Astrocyte of the cerebellum (primary cell): ENCODE measurements at regions of chr11 and their contacts with region 1.

Region 1: GRCh38 chr11:71548716-71549151 is 514 bp downstream of the KRTAP5-9 start:
- DNase-seq: no peak
- H3K4me3 ChIP-seq: no peak overlapping the region
- CTCF ChIP-seq: no peak

Region 2: GRCh38 chr11:71477641-71478527 is 70.8 kb before region 1 on chr11:
- in situ Hi-C with region 1: no loop called
- DNase-seq: no peak
- H3K4me3 ChIP-seq: no peak overlapping the region
- CTCF ChIP-seq: no peak

Region 3: DNA sequence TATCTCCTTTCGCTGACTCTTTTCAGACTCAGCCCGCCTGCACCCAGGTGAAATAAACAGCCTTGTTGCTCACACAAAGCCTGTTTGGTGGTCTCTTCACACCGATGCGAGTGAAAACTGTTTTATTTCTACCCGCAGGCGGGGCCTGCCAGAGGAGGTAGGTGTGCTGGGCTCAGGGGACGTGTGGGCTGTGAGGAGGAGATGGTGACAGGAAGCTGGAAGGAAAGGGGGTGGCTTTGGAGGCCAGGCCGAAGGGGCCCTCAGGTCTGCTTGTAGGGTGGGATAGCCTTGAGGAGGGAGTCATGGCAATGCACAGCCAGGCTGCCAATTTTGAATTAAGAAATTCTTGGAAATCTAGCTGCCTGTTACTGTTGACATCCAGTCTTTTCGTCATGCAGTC is 42.9 kb before region 1 on chr11:
- in situ Hi-C with region 1: loop called (anchors 5 kb)
- DNase-seq: no peak
- H3K4me3 ChIP-seq: no peak overlapping the region
- CTCF ChIP-seq: no peak